ENCODE measurements at regions of chr10 and their contacts with region 1.

Region 1: DNA sequence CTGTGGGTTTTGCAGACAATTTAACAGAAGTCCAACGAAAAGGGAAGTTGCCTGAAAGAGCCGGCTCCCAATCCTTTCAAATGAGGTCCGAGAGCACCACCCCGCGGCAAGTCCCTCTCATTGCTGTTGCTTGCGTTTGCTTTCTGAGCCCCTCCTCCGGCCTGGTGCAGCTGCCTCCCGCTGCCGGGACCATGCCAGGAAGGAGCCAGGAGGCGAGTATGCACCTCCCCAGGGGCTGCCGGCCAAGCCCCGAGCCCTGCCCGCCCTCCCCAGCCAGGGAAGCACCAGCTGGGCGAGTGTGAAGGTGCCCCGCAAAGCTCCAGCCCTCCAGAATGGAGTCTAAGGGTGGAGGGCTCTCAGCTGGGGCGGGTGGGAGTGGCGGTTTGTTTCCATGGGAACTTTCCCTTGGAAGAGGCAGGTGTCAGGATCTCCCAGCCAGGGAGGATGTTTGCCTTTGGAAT is 25.8 kb upstream of the PPP2R2D start:
- DNase-seq: peak; percentile 72
- H3K4me3 ChIP-seq: no peak overlapping the region
- H3K27ac ChIP-seq: no peak overlapping the region
- H3K4me1 ChIP-seq: peaks cover 0 to 7% (median 2%) of the 10 kb centered on the region in 4 donors
- H3K27me3 ChIP-seq: peaks cover 30% of the 10 kb centered on the region
- CTCF ChIP-seq: peak; percentile 59 to 62 (median 62)
- EP300 ChIP-seq: no peak
- POLR2A ChIP-seq: no peak

Region 2: DNA sequence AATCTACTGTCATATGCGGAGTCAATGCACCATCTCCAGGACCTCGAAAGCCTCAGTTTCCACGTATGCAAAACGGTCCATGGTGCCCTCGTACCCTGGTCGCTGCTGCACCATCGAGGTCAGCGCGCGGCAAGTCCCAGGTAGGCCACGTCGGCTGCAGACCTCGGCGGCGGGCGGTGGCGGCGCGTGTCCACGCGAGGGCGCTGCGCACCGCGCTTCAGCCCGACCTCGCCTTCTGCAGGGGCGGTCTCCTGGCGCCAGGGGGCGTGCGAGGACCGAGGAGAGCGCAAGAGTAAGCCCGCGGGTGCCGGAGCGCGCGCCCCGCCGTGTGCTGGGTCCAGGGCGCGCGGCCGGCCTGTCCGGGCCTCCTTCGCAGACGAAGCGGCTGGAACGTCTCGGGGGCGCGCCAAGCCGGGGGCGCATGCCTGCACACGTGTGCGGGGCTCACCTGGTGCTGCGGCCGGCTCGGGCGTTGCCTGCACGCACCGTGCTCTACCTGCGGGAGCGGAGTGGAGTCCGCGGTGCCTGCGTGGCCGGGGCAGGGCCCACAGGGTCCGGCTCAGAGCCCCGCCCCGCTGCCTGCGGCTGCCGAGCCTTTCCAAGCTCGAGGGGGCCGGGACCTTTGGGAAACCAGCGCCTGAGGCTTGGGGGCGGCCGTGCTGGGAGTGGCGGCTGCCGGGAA is 1684.8 kb before region 1 on chr10:
- in situ Hi-C with region 1: loop called in 1 of 4 experiments (anchors 25 kb)
- intact Hi-C with region 1: no loop called
- DNase-seq: peak; percentile 91
- H3K4me3 ChIP-seq: peak overlapping the region; percentile 42 to 67 (median 60)
- H3K27ac ChIP-seq: peak overlapping the region in 1 of 4 donors; percentile 42
- H3K4me1 ChIP-seq: peaks cover 6 to 9% (median 6%) of the 10 kb centered on the region in 4 donors
- H3K27me3 ChIP-seq: peaks cover 8% of the 10 kb centered on the region
- CTCF ChIP-seq: peak in 4 of 5 experiments; percentile 81 to 100 (median 98)
- EP300 ChIP-seq: no peak
- POLR2A ChIP-seq: no peak

Region 3: DNA sequence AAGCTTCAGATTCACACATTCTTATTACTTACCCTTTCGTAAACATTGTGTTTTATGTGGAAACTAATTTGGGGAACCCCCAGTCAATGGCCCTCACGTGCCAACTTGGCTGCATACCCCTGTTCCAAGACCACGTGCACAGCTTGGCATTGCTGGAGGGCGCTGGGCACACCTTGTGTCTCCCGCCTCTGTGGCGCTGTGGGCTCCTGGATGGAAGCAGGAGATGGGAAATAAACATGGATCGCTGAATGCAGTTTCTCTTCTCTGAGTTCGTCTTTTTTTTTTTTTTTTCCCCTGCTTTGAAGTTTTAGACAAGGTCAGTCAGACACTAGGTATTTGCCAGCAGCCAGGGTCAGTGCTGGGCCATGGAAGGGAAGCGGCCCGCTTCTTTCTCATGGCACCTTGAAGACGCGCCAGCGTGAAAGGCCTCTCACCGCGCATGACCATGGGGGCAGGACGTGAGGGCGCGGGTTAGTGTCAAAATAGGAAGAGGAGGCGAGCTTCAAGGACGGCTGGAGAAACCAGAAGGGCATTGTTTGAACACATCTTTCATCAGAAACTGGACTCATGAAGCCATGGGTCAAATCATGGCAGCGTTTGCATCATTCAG is 79.4 kb after region 1 on chr10:
- in situ Hi-C with region 1: no loop called
- intact Hi-C with region 1: no loop called
- DNase-seq: no peak
- H3K4me3 ChIP-seq: no peak overlapping the region
- H3K27ac ChIP-seq: no peak overlapping the region
- H3K4me1 ChIP-seq: no peaks in the 10 kb centered on the region
- H3K27me3 ChIP-seq: no peaks in the 10 kb centered on the region
- CTCF ChIP-seq: no peak
- EP300 ChIP-seq: no peak
- POLR2A ChIP-seq: no peak

Region 4: GRCh38 chr10:132142411-132143161 is 267.6 kb after region 1 on chr10:
- in situ Hi-C with region 1: loop called in 2 of 4 experiments (anchors 25 kb)
- intact Hi-C with region 1: no loop called
- DNase-seq: peak; percentile 27
- H3K4me3 ChIP-seq: no peak overlapping the region
- H3K27ac ChIP-seq: no peak overlapping the region
- H3K4me1 ChIP-seq: no peaks in the 10 kb centered on the region
- H3K27me3 ChIP-seq: peaks cover 11% of the 10 kb centered on the region
- CTCF ChIP-seq: peak; percentile 62 to 88 (median 86)
- EP300 ChIP-seq: no peak
- POLR2A ChIP-seq: no peak